Heart left ventricle (tissue), 16 donors: ENCODE measurements at regions of chr19 and their contacts with region 1.

Region 1: DNA sequence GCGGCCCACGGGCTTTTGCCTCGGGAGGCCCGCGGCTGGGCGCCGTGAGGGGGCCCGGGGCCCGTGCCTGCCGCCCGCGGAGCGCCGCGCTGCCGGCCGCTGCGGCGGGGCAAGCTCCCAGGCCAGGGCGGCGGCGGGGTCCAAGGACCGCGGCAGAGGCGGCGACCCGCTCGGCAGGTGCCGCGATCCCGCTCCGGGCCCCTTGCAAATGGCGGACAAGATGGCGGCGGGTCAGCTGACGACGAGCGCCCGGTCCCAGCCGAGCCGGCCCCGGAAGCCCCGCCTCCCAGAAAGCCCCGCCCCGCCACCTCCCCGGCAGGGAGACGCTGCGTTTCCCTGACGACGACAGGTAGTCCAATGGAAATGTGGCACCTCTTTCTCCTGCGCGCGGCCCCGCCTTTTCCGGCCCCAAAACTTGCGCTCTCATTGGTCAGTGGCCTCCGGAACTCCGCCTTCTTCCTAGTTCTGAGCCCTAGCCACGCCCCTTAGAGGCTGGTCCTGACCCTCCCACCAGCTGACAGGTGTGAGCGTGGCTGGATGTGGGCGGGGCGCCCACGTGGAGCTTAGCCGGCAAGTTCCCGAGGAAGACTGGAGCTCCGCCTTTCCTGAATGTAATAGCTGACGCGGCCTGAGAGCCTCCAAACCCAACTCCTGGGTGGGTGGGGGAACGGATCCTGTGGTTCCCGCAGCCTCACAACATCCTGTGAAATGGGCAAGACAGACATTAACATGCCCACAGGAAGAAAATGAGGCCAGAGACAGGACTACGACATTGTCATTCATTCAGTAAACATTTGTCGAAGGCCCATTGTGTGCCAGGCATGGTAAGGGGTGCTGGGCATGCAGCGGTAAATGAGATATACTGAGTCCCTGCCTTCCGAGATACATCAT is at the start of gene AP3D1:
- DNase-seq: peak; percentile 100
- ATAC-seq: peak; percentile 97 to 99 (median 98)
- H3K4me3 ChIP-seq: peak within 1 kb of the TSS; percentile 70 to 99 (median 97)
- H3K27ac ChIP-seq: peak within 1 kb of the TSS; percentile 44 to 96 (median 89)
- H3K4me1 ChIP-seq: peaks cover 0 to 38% (median 29%) of the 10 kb centered on the region in 12 donors
- H3K27me3 ChIP-seq: no peaks in the 10 kb centered on the region
- CTCF ChIP-seq: no peak
- POLR2A ChIP-seq: peak in 1 of 2 donors; percentile 37
- total RNA-seq, gene AP3D1: 63.1 to 116 (median 103) TPM

Region 2: DNA sequence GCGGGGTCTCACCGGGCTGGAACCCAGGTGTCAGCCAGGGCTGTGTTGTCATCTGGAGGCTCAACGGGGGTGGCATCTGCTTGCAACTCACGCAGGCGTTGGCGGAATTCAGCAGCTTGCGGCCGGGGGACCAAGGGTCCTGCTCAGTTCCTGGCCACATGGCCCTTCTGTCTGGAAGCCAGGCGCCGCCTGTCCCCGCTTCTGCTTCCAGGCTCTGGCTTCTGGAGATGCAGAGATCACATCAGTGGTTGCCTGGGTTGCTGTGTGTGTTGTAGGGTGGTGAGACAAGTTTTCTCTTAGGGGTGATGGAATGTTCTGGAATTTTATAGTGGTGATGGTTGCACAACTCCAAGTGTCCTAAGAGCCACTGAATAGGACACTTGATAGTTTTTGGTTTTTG is 241.4 kb before region 1 on chr19:
- intact Hi-C with region 1: no loop called
- DNase-seq: no peak
- ATAC-seq: no peak
- H3K4me3 ChIP-seq: no peak overlapping the region
- H3K27ac ChIP-seq: peak overlapping the region in 1 of 12 donors; percentile 60
- H3K4me1 ChIP-seq: peaks cover 0 to 43% (median 7%) of the 10 kb centered on the region in 12 donors
- H3K27me3 ChIP-seq: no peaks in the 10 kb centered on the region
- CTCF ChIP-seq: no peak
- POLR2A ChIP-seq: no peak

Region 3: GRCh38 chr19:2113439-2114211 is 38.0 kb before region 1 on chr19:
- intact Hi-C with region 1: no loop called
- DNase-seq: no peak
- ATAC-seq: no peak
- H3K4me3 ChIP-seq: no peak overlapping the region
- H3K27ac ChIP-seq: peak overlapping the region in 1 of 12 donors; percentile 38
- H3K4me1 ChIP-seq: peaks cover 0 to 8% (median 0%) of the 10 kb centered on the region in 12 donors
- H3K27me3 ChIP-seq: no peaks in the 10 kb centered on the region
- CTCF ChIP-seq: no peak
- POLR2A ChIP-seq: no peak

Region 4: DNA sequence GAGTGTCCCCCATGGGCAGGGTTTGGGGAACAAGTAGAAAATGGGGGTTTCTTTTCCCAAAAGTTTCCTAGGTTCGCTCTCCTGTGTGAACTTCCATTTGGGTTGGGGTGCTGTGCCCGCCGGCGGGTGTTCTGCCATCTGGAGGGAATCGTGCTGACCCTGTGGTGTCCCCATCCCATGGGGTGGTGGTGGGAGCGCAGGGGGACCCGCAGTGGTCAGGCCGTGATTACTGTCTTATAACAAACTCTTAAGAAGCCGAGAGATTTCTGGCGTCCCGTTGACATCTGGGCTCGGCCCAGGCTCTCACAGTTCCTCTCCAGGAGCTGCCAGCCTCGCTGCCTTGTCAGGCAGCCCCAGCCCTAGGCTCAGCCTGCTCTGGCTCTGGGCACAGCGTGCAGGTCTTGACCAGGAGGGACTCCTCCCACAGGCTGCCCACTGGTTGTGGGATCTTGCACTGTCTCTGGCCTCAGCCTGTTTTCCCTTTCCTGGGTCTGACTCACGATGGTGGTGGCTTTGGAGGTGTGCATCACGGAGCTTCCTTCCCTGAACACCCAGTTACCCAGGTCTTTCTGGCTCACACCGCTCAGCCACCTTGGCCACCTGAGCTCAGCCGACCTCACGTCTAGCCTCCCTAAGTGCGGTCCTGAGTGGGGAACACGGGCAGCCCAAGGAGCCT is 50.0 kb after region 1 on chr19:
- intact Hi-C with region 1: loop called in 3 of 10 experiments (anchors 5 to 10 kb)
- DNase-seq: no peak
- ATAC-seq: no peak
- H3K4me3 ChIP-seq: no peak overlapping the region
- H3K27ac ChIP-seq: no peak overlapping the region
- H3K4me1 ChIP-seq: peaks cover 0 to 7% (median 0%) of the 10 kb centered on the region in 12 donors
- H3K27me3 ChIP-seq: no peaks in the 10 kb centered on the region
- CTCF ChIP-seq: no peak
- POLR2A ChIP-seq: no peak

Region 5: GRCh38 chr19:2236314-2237050 is 84.9 kb after region 1 on chr19 and contains the starts of genes PLEKHJ1 and SF3A2:
- intact Hi-C with region 1: loop called in 7 of 10 experiments (anchors 1 to 10 kb)
- DNase-seq: peak; percentile 97 to 99 (median 98)
- ATAC-seq: peak; percentile 91 to 95 (median 94)
- H3K4me3 ChIP-seq: peak within 1 kb of the TSS; percentile 72 to 98 (median 94)
- H3K27ac ChIP-seq: peak within 1 kb of the TSS; percentile 92 to 100 (median 99)
- H3K4me1 ChIP-seq: peaks cover 14 to 75% (median 54%) of the 10 kb centered on the region in 12 donors
- H3K27me3 ChIP-seq: no peaks in the 10 kb centered on the region
- CTCF ChIP-seq: peak; percentile 92 to 100 (median 98)
- POLR2A ChIP-seq: peak in 1 of 2 donors; percentile 52
- total RNA-seq, gene PLEKHJ1: 44.6 to 63.2 (median 46.5) TPM
- total RNA-seq, gene SF3A2: 19.2 to 43.9 (median 28.6) TPM

Region 6: GRCh38 chr19:2315818-2316353 is 164.3 kb after region 1 on chr19:
- intact Hi-C with region 1: loop called in 9 of 10 experiments (anchors 1 to 5 kb)
- DNase-seq: peak; percentile 73 to 89 (median 77)
- ATAC-seq: peak; percentile 92 to 94 (median 94)
- H3K4me3 ChIP-seq: no peak overlapping the region
- H3K27ac ChIP-seq: peak overlapping the region in 1 of 12 donors; percentile 70
- H3K4me1 ChIP-seq: peaks cover 0 to 14% (median 7%) of the 10 kb centered on the region in 12 donors
- H3K27me3 ChIP-seq: peaks cover 3 to 30% (median 13%) of the 10 kb centered on the region in 9 donors
- CTCF ChIP-seq: peak; percentile 52 to 74 (median 61)
- POLR2A ChIP-seq: no peak

Region 7: GRCh38 chr19:2391118-2391725 is 239.6 kb after region 1 on chr19:
- intact Hi-C with region 1: loop called in 8 of 10 experiments (anchors 2 to 10 kb)
- DNase-seq: peak in 2 of 5 donors; percentile 34 to 35
- ATAC-seq: peak in 3 of 4 donors; percentile 50 to 62 (median 62)
- H3K4me3 ChIP-seq: no peak overlapping the region
- H3K27ac ChIP-seq: no peak overlapping the region
- H3K4me1 ChIP-seq: peaks cover 0 to 5% (median 0%) of the 10 kb centered on the region in 12 donors
- H3K27me3 ChIP-seq: peaks cover 0 to 20% (median 0%) of the 10 kb centered on the region in 9 donors
- CTCF ChIP-seq: peak; percentile 67 to 78 (median 74)
- POLR2A ChIP-seq: no peak